Left ventricle myocardium inferior (tissue), 1 donor: ENCODE measurements at regions of chr14 and their contacts with region 1.

Region 1: DNA sequence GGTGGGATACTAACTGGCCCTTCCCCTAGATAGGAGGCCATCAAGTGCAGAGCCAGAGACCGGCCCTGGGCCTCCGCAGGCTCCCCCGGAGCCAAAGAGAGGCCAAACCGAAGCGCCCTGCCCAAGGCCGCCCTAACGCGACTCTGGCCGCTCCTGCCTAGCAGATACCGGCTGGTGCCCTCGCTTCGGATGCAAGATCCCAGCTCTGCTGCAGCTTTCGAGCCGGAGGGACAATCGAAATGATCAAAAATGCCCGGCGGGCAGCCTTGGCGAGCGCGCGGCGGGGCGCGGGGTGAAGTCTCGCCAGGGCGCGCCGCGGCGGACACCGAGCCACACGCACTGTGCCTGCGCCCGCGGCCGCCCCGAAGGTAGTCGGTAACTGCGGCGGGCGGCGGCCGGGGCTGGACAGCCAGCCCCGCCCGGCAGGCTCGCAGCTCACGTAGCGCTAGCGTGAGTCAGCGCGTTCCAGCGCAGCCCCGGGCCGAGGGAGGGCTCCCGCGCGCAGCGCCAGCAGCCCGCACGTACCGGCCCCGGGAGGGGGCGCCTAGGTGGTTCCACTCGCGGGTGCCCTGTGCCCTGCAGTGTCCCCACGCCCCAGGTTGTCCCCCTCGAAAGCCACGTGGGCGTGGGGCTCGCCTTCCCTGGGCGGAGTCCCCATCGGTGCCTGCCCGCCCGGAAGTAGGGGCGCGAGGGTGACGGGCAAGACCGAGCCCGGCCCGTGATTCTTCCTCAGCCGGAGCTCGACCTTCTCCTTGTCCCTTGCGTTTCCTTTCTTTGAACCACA is 109.2 kb upstream of the EGLN3 start:
- DNase-seq: peak; percentile 85
- H3K4me3 ChIP-seq: peak overlapping the region; percentile 74
- H3K27ac ChIP-seq: peak overlapping the region; percentile 97
- H3K4me1 ChIP-seq: peaks cover 44% of the 10 kb centered on the region
- H3K27me3 ChIP-seq: no peaks in the 10 kb centered on the region
- CTCF ChIP-seq: peak; percentile 44

Region 2: GRCh38 chr14:33943096-33943884 is 116.8 kb before region 1 on chr14:
- intact Hi-C with region 1: loop called (anchors 10 kb)
- DNase-seq: no peak
- H3K4me3 ChIP-seq: no peak overlapping the region
- H3K27ac ChIP-seq: peak overlapping the region; percentile 27
- H3K4me1 ChIP-seq: peaks cover 98% of the 10 kb centered on the region
- H3K27me3 ChIP-seq: no peaks in the 10 kb centered on the region
- CTCF ChIP-seq: no peak

Region 3: DNA sequence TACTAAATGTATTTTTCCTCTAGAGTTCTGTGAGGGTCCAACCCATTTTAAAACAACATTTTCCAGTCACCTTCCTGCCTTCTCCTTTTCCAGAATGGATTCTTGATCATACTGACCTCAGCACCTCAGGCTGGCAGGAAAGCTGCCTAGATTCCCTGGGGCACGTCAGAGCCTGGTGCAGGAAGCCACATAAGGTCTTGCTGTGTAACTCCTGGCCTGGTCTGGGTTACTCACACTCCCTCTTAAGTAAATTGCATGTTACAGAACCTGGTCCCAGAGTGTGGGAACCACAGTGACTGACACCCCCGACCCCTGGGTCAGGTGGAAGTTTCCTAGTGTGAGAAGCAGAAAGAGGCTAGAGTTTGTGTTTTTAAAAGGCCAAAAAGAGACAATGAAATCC is 192.2 kb after region 1 on chr14:
- intact Hi-C with region 1: no loop called
- DNase-seq: no peak
- H3K4me3 ChIP-seq: no peak overlapping the region
- H3K27ac ChIP-seq: peak overlapping the region; percentile 66
- H3K4me1 ChIP-seq: peaks cover 30% of the 10 kb centered on the region
- H3K27me3 ChIP-seq: no peaks in the 10 kb centered on the region
- CTCF ChIP-seq: no peak